Aorta (tissue), 5 donors: ENCODE measurements at regions of chr2 and their contacts with region 1.

Region 1: GRCh38 chr2:27078267-27079194 is at the start of gene EMILIN1:
- DNase-seq: peak; percentile 95 to 96
- ATAC-seq: peak; percentile 91
- H3K4me3 ChIP-seq: peak within 1 kb of the TSS; percentile 28 to 77
- H3K27ac ChIP-seq: peak within 1 kb of the TSS; percentile 3 to 80
- H3K4me1 ChIP-seq: no peaks in the 10 kb centered on the region
- H3K27me3 ChIP-seq: no peaks in the 10 kb centered on the region
- total RNA-seq, gene EMILIN1: 180 to 200 TPM

Region 2: DNA sequence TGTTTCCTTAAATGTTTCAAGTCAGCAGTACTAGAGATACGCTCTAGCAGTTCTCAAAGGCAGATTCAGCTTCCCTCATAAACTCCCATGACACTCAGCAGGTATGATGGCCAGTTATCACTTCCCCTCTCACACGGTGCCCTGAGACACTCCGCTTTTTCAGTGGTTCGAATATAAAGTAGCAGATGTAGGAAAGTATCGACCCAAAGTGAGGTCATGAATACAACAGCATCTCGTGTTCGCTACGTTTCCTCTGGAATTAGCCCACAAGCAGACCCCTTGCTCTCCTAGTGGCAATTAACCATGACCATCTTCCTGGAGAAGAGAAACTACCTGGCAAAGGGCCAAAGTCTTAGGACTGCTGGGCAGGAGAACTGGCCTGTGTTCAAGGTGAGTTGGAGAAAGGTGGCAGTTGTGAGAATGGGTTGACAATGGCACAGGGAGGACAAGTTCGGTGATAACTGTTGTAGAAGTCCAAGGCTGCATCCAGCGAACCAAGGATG is 36.3 kb before region 1 on chr2:
- intact Hi-C with region 1: loop called in 1 of 2 experiments (anchors 5 kb)
- DNase-seq: no peak
- ATAC-seq: no peak
- H3K4me3 ChIP-seq: no peak overlapping the region
- H3K27ac ChIP-seq: no peak overlapping the region
- H3K4me1 ChIP-seq: no peaks in the 10 kb centered on the region
- H3K27me3 ChIP-seq: no peaks in the 10 kb centered on the region

Region 3: DNA sequence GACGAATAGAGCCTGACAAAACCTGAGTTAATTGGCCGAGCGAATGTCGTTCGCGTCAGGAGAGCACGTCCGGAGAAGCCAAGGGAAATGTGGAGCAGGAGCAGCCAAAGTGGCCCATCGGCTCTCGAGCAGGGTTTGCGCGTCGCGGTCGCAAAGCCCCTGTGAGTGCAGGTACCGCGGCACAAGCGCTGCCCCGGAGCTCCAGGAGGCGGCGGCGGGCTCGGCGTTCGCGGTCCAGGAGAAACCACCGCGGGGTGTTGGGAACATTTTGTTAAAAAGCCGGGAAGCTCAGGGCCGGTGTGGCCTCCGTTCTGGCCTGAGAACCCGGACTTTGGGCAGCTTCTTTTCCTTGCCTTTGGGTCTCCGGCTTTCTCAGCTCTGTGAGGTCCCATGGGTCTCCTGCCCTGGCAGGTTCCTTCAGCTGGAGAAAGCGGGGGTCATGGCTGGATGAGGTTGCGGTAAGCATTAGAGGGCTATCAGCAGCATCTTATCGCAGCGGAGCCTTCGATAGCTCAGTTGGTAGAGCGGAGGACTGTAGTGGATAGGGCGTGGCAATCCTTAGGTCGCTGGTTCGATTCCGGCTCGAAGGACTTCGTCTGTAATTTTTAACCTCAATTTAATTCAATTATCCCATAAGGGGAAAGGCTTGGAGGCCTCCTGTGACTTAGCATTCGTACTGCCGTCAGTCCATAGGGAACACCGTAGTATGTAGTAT is 28.1 kb before region 1 on chr2:
- intact Hi-C with region 1: loop called in 1 of 2 experiments (anchors 2 kb)
- DNase-seq: peak; percentile 87 to 95
- ATAC-seq: peak; percentile 94
- H3K4me3 ChIP-seq: peak overlapping the region; percentile 58 to 62
- H3K27ac ChIP-seq: peak overlapping the region in 1 of 2 donors; percentile 49
- H3K4me1 ChIP-seq: no peaks in the 10 kb centered on the region
- H3K27me3 ChIP-seq: no peaks in the 10 kb centered on the region